ENCODE measurements at regions of chr20 and their contacts with region 1.

Region 1: GRCh38 chr20:13546497-13547131 is 92.1 kb downstream of the TASP1 start:
- DNase-seq: peak; percentile 40
- H3K4me3 Mint-ChIP-seq: no peak overlapping the region
- H3K27ac Mint-ChIP-seq: no peak overlapping the region
- H3K4me1 Mint-ChIP-seq: no peaks in the 10 kb centered on the region
- H3K27me3 Mint-ChIP-seq: no peaks in the 10 kb centered on the region

Region 2: GRCh38 chr20:12970372-12970821 is 576.2 kb before region 1 on chr20:
- intact Hi-C with region 1: loop called (anchors 1 kb)
- DNase-seq: no peak
- H3K4me3 Mint-ChIP-seq: no peak overlapping the region
- H3K27ac Mint-ChIP-seq: no peak overlapping the region
- H3K4me1 Mint-ChIP-seq: no peaks in the 10 kb centered on the region
- H3K27me3 Mint-ChIP-seq: no peaks in the 10 kb centered on the region

Region 3: GRCh38 chr20:13119583-13119982 is 427.0 kb before region 1 on chr20:
- intact Hi-C with region 1: loop called (anchors 1 kb)
- DNase-seq: peak; percentile 16
- H3K4me3 Mint-ChIP-seq: no peak overlapping the region
- H3K27ac Mint-ChIP-seq: no peak overlapping the region
- H3K4me1 Mint-ChIP-seq: no peaks in the 10 kb centered on the region
- H3K27me3 Mint-ChIP-seq: peaks cover 6% of the 10 kb centered on the region

Region 4: DNA sequence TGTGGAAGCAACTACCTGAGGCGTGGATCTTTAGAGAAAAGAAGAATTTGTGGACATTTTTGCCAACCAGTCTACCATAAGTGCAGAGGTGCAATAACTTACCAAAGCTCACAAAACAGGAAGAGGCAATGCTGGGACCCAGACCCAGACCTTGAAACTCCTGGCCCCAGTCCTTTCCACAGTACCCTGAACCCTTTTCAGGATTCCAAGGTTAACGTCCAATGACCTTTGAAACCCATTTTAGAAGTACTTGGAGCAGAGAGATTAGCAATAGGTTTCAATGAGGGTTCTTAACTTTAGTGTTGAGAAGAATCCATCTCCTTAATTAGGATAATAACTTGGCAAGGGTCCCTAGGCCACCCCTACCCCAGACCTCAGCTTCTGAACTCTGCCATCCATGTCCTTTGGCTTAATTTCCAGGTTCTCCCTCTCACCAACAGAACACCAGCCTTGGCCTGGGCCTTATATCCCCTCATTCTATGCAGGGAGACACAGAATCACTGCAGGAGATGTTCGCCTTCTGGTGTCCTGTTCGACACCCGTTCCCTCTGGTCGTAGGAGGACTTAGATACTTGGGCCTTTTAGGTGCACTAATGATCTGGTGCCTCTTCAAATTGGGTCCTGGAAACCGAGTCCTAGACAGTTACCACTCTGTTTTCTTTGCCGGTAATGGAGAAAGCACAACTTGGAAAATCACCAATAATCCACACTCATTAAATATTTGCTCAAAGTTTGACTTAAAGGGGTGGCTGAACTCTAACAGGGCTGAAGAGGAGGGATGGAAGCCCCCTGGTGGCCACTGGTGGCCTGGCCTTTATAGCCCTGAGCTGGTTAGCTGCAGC is 284.9 kb before region 1 on chr20:
- intact Hi-C with region 1: loop called (anchors 5 kb)
- DNase-seq: peak; percentile 20
- H3K4me3 Mint-ChIP-seq: no peak overlapping the region
- H3K27ac Mint-ChIP-seq: no peak overlapping the region
- H3K4me1 Mint-ChIP-seq: no peaks in the 10 kb centered on the region
- H3K27me3 Mint-ChIP-seq: no peaks in the 10 kb centered on the region

Region 5: GRCh38 chr20:13325033-13325432 is 221.6 kb before region 1 on chr20:
- intact Hi-C with region 1: loop called (anchors 1 kb)
- DNase-seq: no peak
- H3K4me3 Mint-ChIP-seq: no peak overlapping the region
- H3K27ac Mint-ChIP-seq: peak overlapping the region; percentile 9
- H3K4me1 Mint-ChIP-seq: peaks cover 13% of the 10 kb centered on the region
- H3K27me3 Mint-ChIP-seq: peaks cover 4% of the 10 kb centered on the region

Region 6: GRCh38 chr20:13458860-13459451 is 87.7 kb before region 1 on chr20:
- intact Hi-C with region 1: loop called (anchors 1 kb)
- DNase-seq: no peak
- H3K4me3 Mint-ChIP-seq: no peak overlapping the region
- H3K27ac Mint-ChIP-seq: no peak overlapping the region
- H3K4me1 Mint-ChIP-seq: no peaks in the 10 kb centered on the region
- H3K27me3 Mint-ChIP-seq: no peaks in the 10 kb centered on the region

Region 7: GRCh38 chr20:13571662-13572061 is 25.0 kb after region 1 on chr20:
- intact Hi-C with region 1: no loop called
- DNase-seq: no peak
- H3K4me3 Mint-ChIP-seq: no peak overlapping the region
- H3K27ac Mint-ChIP-seq: no peak overlapping the region
- H3K4me1 Mint-ChIP-seq: no peaks in the 10 kb centered on the region
- H3K27me3 Mint-ChIP-seq: no peaks in the 10 kb centered on the region

Region 8: DNA sequence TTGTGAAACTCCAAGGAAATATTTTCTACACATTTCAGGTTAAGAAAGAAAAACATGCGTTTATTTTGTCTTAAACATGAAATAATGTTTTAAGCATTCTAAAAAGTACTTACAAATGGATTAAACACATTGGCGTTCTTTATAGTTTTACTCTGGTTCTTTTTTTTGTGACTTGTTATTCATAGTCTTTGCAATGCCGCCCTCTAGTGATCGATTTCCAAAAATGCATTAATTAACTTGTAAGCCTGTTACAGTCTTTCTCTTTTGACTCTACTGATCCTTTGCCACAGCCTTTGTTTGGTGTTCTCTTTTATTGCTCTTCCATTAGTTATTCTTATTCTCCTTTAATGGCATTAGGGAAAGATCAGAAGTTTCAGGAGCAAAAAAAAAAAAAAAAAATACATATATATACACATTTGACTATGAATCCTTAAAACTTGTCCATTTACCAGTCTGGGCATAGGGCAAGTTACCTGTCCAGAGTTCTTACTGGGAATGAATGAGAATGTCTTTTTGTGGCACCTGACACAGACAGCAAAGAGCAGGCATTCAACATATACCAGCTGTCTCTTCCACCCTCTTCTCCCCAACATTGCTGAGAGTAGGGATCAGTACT is 508.6 kb after region 1 on chr20:
- intact Hi-C with region 1: loop called (anchors 5 kb)
- DNase-seq: no peak
- H3K4me3 Mint-ChIP-seq: no peak overlapping the region
- H3K27ac Mint-ChIP-seq: no peak overlapping the region
- H3K4me1 Mint-ChIP-seq: no peaks in the 10 kb centered on the region
- H3K27me3 Mint-ChIP-seq: no peaks in the 10 kb centered on the region